ENCODE measurements at regions of chr10 and their contacts with region 1.

Region 1: GRCh38 chr10:62244780-62245467 is 23.7 kb downstream of the RTKN2 start:
- DNase-seq: no peak
- ATAC-seq: peak; percentile 81

Region 2: DNA sequence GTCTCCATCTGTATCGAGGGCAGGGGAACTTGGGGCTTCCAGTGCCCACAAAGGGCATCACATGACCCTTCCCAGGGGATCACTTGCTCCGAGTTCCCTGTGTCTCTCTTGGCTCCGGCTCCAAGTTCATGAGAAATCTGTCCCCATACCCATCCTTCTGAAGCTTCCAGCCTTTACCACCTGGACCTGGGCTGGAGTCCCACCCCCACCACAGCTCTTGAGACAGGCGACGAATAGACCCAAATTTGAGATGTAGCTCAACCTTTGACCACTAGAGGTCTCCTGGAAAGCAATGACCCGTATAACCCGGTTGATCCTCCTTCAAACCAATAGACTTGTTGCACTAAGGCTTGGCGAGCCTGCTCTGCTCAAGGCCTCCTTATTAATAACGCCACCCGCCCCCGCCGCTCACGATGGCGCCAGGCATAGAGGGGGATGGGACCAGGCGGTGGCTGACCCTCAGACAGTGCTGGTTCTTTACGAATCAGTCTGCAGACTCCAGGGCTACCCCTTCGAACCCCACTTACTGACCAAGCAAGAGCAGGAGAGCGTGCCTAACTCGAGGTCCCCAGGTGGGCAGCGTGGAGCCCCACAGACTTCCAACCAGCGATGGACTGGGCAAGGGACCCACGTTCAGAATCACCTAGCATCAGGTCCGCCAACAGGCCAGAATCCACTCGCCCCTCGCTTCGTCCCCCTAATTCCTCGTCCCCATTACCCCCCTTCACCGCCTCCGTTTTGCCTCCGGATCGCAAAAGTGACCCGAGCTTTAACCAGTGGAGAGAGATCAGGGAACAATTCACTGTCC is 347.9 kb before region 1 on chr10:
- intact Hi-C with region 1: loop called (anchors 5 kb)
- DNase-seq: peak; percentile 70
- ATAC-seq: peak; percentile 82